MCF 10A (cell line): ENCODE measurements at regions of chr12 and their contacts with region 1.

Region 1: DNA sequence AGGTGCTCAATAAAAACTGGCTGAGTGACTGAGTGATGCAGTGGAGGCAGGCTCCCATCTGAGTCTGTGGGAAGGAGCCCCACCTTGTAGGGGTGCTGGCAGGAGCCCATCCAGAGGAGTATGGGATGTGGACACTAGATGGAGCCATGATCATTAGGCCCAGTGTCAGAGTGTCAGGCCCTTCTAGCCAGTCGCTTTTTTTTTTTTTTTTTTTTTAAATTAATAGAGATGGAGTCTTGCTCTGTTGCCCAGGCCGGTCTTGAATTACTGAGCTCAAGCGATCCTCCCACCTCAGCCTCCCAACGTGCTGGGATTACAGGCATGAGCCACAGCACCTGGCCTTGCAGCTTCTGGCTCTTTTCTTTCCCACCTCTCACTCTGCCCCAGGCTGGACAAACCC is 11.5 kb downstream of the RITA1 start:
- DNase-seq: peak; percentile 88
- H3K4me3 Mint-ChIP-seq: no peak overlapping the region
- H3K27ac Mint-ChIP-seq: no peak overlapping the region
- H3K4me1 Mint-ChIP-seq: peaks cover 15% of the 10 kb centered on the region
- H3K27me3 Mint-ChIP-seq: no peaks in the 10 kb centered on the region
- CTCF ChIP-seq: peak; percentile 66

Region 2: GRCh38 chr12:113184900-113185773 is 11.9 kb before region 1 on chr12 and contains the starts of genes DDX54 and RITA1:
- CTCF ChIA-PET with region 1: interaction called, 13 read pairs
- POLR2A ChIA-PET with region 1: interaction called, 16 read pairs
- intact Hi-C with region 1: no loop called
- DNase-seq: peak; percentile 91
- H3K4me3 Mint-ChIP-seq: peak within 1 kb of the TSS; percentile 91
- H3K27ac Mint-ChIP-seq: peak within 1 kb of the TSS; percentile 94
- H3K4me1 Mint-ChIP-seq: peaks cover 15% of the 10 kb centered on the region
- H3K27me3 Mint-ChIP-seq: no peaks in the 10 kb centered on the region
- CTCF ChIP-seq: no peak
- total RNA-seq, gene DDX54: 67.3 and 75.8 TPM in 2 replicates
- total RNA-seq, gene RITA1: 17.5 and 17.9 TPM in 2 replicates

Region 3: DNA sequence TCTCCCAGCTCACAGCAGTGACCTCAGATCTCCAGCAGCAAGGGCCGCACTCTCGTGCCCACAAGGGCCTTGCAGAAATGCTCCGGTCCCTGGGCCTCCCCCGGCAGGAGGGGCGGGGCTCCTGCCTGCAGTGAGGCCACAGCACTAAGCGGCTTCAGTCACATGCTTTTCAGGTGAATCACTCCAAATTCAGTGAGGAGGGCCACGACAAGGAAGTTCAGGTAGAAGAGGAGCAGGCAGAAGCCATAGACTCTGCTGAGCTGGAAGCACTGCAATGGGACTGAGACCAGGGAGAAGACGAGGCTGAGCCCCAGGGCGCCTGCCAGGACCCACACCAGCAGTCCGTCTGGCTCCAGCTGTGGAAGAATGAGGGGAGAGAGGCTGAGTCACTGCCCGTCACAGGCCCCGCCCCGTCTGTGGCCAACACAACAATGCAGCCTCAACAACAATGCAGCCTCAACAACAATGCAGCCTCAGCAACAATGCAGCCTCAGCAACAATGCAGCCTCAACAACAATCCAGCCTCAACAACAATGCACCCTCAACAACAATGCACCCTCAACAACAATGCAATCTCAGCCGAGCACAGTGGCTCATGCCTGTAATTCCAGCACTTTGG is 102.7 kb after region 1 on chr12:
- CTCF ChIA-PET with region 1: interaction called, 5 read pairs
- POLR2A ChIA-PET with region 1: no interaction called
- intact Hi-C with region 1: loop called (anchors 10 kb)
- DNase-seq: peak; percentile 77
- H3K4me3 Mint-ChIP-seq: peak overlapping the region; percentile 41
- H3K27ac Mint-ChIP-seq: peak overlapping the region; percentile 72
- H3K4me1 Mint-ChIP-seq: peaks cover 8% of the 10 kb centered on the region
- H3K27me3 Mint-ChIP-seq: no peaks in the 10 kb centered on the region
- CTCF ChIP-seq: no peak

Region 4: GRCh38 chr12:113310489-113310888 is 113.5 kb after region 1 on chr12:
- CTCF ChIA-PET with region 1: interaction called, 5 read pairs
- POLR2A ChIA-PET with region 1: no interaction called
- intact Hi-C with region 1: loop called (anchors 1 kb)
- DNase-seq: peak; percentile 30
- H3K4me3 Mint-ChIP-seq: no peak overlapping the region
- H3K27ac Mint-ChIP-seq: no peak overlapping the region
- H3K4me1 Mint-ChIP-seq: peaks cover 5% of the 10 kb centered on the region
- H3K27me3 Mint-ChIP-seq: no peaks in the 10 kb centered on the region
- CTCF ChIP-seq: peak; percentile 18

Region 5: DNA sequence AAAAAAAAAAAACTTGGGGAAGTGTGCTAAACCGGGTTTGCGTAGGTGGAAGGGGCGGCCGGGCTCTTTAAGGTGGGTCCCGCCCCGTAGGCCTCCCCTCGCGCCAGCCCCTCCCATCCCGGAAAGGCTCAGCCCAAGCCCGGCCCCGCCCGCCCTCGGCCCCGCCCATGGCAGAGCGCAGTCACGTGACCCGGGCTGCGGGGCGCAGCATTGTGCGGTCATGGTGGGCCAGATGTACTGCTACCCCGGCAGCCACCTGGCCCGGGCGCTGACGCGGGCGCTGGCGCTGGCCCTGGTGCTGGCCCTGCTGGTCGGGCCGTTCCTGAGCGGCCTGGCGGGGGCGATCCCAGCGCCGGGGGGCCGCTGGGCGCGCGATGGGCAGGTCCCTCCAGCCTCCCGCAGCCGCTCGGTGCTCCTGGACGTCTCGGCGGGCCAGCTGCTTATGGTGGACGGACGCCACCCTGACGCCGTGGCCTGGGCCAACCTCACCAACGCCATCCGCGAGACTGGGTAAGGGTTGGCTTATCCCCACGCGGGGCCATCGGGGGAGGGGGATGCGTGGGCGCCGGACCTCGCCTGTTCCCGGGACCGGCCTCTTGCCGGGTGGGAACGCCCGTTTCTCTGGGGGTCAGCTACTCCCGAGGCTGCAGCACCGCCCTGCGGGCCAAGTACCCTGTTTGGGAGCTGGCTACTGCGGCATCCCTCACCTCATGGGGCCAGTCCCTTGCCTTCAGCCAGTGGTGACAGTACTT is 161.6 kb after region 1 on chr12 and contains the start of gene PLBD2:
- CTCF ChIA-PET with region 1: no interaction called
- POLR2A ChIA-PET with region 1: no interaction called
- intact Hi-C with region 1: loop called (anchors 2 kb)
- DNase-seq: peak; percentile 91
- H3K4me3 Mint-ChIP-seq: peak within 1 kb of the TSS; percentile 85
- H3K27ac Mint-ChIP-seq: peak within 1 kb of the TSS; percentile 83
- H3K4me1 Mint-ChIP-seq: peaks cover 9% of the 10 kb centered on the region
- H3K27me3 Mint-ChIP-seq: no peaks in the 10 kb centered on the region
- CTCF ChIP-seq: no peak
- total RNA-seq, gene PLBD2: 18.1 and 24.0 TPM in 2 replicates

Region 6: DNA sequence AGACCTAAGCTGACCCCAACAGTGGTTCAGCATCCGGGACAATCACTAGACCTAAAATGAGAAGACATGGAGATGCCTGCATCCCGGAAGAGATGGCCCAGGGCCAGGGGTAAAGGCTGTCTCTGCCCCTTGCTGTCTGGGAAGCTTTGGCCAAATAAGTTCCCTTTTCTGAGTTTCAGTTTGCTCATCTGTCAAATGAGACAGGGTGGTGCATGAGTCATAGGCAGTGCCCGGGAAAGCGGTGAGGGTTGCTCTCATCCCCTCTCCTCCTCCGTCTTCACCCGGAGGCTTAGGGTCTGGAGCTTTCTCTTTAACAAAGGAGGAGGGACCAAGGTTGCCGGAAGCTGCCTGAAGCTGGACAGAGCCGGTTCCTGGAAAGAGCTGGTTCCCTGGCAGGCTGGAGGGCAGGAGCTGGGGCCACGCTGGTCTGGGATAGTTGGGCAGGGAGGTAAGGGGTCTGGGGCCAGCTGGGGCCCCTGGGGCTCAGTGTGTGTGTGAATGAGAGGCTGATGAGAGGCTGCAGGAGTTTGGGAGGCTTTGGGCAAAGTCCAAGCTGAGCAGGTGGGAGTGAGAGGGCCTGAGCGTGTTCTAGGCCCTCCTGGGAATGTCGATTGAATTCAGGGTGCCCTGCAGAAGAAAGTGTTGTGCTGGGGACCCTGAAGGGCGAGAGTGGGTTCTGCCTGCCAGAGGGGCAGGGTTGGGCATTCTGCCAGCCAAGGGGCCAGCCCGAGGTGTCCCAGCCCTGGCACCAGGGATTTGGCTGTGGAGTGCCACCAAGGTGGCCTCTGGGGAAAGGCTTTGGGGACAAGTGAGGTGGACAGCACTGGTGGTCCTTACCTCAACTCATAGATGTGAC is 225.3 kb after region 1 on chr12 and contains the start of gene SDSL:
- CTCF ChIA-PET with region 1: interaction called, 13 read pairs
- POLR2A ChIA-PET with region 1: no interaction called
- intact Hi-C with region 1: loop called (anchors 1 kb)
- DNase-seq: peak; percentile 96
- H3K4me3 Mint-ChIP-seq: peak within 1 kb of the TSS; percentile 91
- H3K27ac Mint-ChIP-seq: peak within 1 kb of the TSS; percentile 93
- H3K4me1 Mint-ChIP-seq: peaks cover 5% of the 10 kb centered on the region
- H3K27me3 Mint-ChIP-seq: no peaks in the 10 kb centered on the region
- CTCF ChIP-seq: no peak
- total RNA-seq, gene SDSL: 21.1 and 32.7 TPM in 2 replicates